Mammary epithelial cell (primary cell): ENCODE measurements at regions of chr10 and their contacts with region 1.

Region 1: GRCh38 chr10:89217057-89217990 is 10.2 kb upstream of the CH25H start:
- DNase-seq: peak; percentile 36
- H3K4me3 ChIP-seq: no peak overlapping the region
- H3K27ac ChIP-seq: peak overlapping the region; percentile 15
- H3K4me1 ChIP-seq: peaks cover 10% of the 10 kb centered on the region
- H3K27me3 ChIP-seq: no peaks in the 10 kb centered on the region
- CTCF ChIP-seq: peak; percentile 61 to 69

Region 2: DNA sequence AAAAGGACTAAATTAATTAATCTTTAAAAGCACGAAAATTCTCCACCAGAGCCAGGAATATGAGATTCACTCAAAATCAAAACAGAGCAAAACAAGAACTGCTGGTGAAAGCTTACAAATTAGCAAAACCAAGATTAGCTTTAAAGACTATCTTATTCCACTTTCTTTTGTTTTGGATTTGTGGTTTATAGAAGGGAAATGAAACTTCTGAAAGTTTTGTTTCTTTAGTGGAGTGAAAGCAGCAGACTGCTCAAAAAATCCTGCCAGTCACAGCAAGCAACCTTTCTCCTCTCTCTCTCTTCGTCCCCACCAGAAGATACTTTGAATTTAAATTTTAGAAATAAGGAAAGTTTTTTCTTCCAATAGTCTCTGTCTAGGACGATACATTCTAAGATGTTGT is 272.5 kb before region 1 on chr10:
- CTCF ChIA-PET with region 1: no interaction called
- dilution Hi-C with region 1: no loop called
- in situ Hi-C with region 1: loop called in 1 of 2 experiments (anchors 5 kb)
- intact Hi-C with region 1: no loop called
- DNase-seq: no peak
- H3K4me3 ChIP-seq: no peak overlapping the region
- H3K27ac ChIP-seq: no peak overlapping the region
- H3K4me1 ChIP-seq: no peaks in the 10 kb centered on the region
- H3K27me3 ChIP-seq: no peaks in the 10 kb centered on the region
- CTCF ChIP-seq: no peak

Region 3: DNA sequence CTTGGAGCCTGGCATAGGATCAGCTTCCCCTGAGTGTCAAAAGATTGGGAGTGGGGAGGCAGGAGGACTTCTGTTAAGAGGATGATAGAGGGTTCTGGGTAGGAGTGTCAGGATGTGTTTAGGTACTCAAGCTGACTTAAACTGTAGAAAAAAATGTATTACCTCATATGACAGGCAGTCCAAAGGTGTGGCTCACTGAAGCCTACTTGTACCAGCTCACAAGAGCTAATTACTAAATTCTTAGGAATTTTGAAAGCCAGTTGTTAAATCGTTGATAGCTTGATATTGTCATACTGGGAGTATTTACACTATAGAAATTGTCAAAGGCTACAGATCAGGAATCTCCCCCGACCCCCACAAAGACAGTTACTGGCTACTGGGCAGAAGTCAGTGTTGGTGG is 194.6 kb before region 1 on chr10:
- CTCF ChIA-PET with region 1: no interaction called
- dilution Hi-C with region 1: loop called (anchors 5 kb)
- in situ Hi-C with region 1: no loop called
- intact Hi-C with region 1: no loop called
- DNase-seq: peak; percentile 49
- H3K4me3 ChIP-seq: no peak overlapping the region
- H3K27ac ChIP-seq: no peak overlapping the region
- H3K4me1 ChIP-seq: peaks cover 8% of the 10 kb centered on the region
- H3K27me3 ChIP-seq: no peaks in the 10 kb centered on the region
- CTCF ChIP-seq: no peak

Region 4: GRCh38 chr10:89175816-89176215 is 41.5 kb before region 1 on chr10:
- CTCF ChIA-PET with region 1: no interaction called
- dilution Hi-C with region 1: loop called (anchors 5 kb)
- in situ Hi-C with region 1: no loop called
- intact Hi-C with region 1: no loop called
- DNase-seq: no peak
- H3K4me3 ChIP-seq: no peak overlapping the region
- H3K27ac ChIP-seq: no peak overlapping the region
- H3K4me1 ChIP-seq: peaks cover 15% of the 10 kb centered on the region
- H3K27me3 ChIP-seq: no peaks in the 10 kb centered on the region
- CTCF ChIP-seq: no peak

Region 5: GRCh38 chr10:89563861-89564478 is 346.6 kb after region 1 on chr10:
- CTCF ChIA-PET with region 1: no interaction called
- dilution Hi-C with region 1: no loop called
- in situ Hi-C with region 1: no loop called
- intact Hi-C with region 1: loop called (anchors 2 kb)
- DNase-seq: peak; percentile 48
- H3K4me3 ChIP-seq: no peak overlapping the region
- H3K27ac ChIP-seq: no peak overlapping the region
- H3K4me1 ChIP-seq: no peaks in the 10 kb centered on the region
- H3K27me3 ChIP-seq: no peaks in the 10 kb centered on the region
- CTCF ChIP-seq: peak; percentile 63 to 71